ENCODE measurements at regions of chr2 and their contacts with region 1.

Region 1: GRCh38 chr2:207529330-207530159 is at the start of gene CREB1:
- DNase-seq: peak; percentile 98 to 99
- H3K4me3 ChIP-seq: peak within 1 kb of the TSS; percentile 53 to 82 (median 79)
- H3K27ac ChIP-seq: peak within 1 kb of the TSS; percentile 97 to 98 (median 97)
- H3K4me1 ChIP-seq: peaks cover 30 to 34% of the 10 kb centered on the region in 2 donors
- H3K27me3 ChIP-seq: no peaks in the 10 kb centered on the region
- CTCF ChIP-seq: peak in 1 of 6 experiments; percentile 18
- POLR2A ChIP-seq: peak; percentile 70 to 99
- total RNA-seq, gene CREB1: 56.1 to 105 (median 59.2) TPM

Region 2: DNA sequence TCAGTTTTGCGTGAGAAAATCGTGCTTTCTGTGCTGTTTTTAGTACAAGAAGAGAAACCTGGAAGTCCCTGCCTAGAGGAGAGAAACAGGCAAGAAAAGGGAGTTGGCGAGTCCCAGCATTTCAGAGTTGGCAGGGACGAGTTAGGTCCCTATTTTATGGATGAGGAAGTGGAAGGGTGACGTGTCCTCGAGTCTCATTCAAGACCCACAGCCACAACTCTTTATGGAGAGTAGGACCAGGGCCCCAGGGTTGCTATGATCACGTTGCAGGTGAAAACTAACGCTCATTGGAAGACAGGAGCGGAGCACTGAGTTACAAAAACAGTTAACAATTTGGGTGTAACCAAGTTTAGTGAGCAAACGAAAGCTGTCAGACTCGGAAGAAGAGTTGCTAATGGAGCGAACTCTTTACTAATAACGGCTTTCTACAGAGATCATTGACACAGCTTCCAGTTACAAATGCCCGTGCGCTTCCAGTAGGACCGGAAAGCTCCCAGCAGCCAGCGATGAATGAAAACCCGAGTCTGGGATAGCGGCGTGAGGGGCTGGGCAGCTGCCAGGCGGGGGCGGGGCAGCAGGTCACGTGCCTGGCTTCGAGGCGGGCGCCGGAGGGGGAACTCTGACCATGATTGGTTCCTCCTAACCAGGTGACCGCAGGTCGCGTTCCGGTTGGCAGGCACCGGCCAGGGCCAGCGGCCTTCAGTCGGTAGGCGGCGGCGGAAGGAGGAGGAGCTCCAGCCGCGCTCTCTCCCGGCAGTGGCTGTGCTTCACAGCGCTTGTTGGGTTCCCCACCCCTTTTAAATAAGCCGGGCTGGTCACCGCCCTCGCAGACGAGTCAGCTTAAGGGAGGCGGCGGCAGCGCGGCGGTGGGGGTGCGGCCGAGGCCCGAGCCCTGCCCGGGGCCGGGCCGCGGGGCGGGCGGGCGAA is 181.5 kb after region 1 on chr2 and contains the start of gene CCNYL1:
- intact Hi-C with region 1: loop called (anchors 10 kb)
- DNase-seq: peak; percentile 99
- H3K4me3 ChIP-seq: peak within 1 kb of the TSS; percentile 71 to 86 (median 86)
- H3K27ac ChIP-seq: peak within 1 kb of the TSS; percentile 82 to 91 (median 88)
- H3K4me1 ChIP-seq: peaks cover 11 to 18% of the 10 kb centered on the region in 2 donors
- H3K27me3 ChIP-seq: no peaks in the 10 kb centered on the region
- CTCF ChIP-seq: peak in 4 of 6 experiments; percentile 16 to 57 (median 32)
- POLR2A ChIP-seq: peak in 1 of 2 donors; percentile 98
- total RNA-seq, gene CCNYL1: 14.8 to 22.2 (median 17.9) TPM